ENCODE measurements at regions of chr2 and their contacts with region 1.

Region 1: GRCh38 chr2:101704046-101704466 is 6.5 kb downstream of the MAP4K4 start:
- DNase-seq: no peak
- ATAC-seq: peak in 3 of 8 donors; percentile 44 to 61 (median 56)
- H3K4me3 ChIP-seq: peak overlapping the region in 1 of 10 donors; percentile 15
- H3K27ac ChIP-seq: peak overlapping the region in 6 of 10 donors; percentile 14 to 67 (median 38)
- H3K4me1 ChIP-seq: peaks cover 11 to 91% (median 85%) of the 10 kb centered on the region in 9 donors
- H3K27me3 ChIP-seq: no peaks in the 10 kb centered on the region
- CTCF ChIP-seq: no peak

Region 2: GRCh38 chr2:101623031-101623521 is 81.0 kb before region 1 on chr2:
- intact Hi-C with region 1: no loop called
- DNase-seq: no peak
- ATAC-seq: peak in 6 of 8 donors; percentile 25 to 72 (median 44)
- H3K4me3 ChIP-seq: no peak overlapping the region
- H3K27ac ChIP-seq: no peak overlapping the region
- H3K4me1 ChIP-seq: peaks cover 0 to 34% (median 0%) of the 10 kb centered on the region in 9 donors
- H3K27me3 ChIP-seq: peaks cover 0 to 48% (median 0%) of the 10 kb centered on the region in 7 donors
- CTCF ChIP-seq: no peak

Region 3: DNA sequence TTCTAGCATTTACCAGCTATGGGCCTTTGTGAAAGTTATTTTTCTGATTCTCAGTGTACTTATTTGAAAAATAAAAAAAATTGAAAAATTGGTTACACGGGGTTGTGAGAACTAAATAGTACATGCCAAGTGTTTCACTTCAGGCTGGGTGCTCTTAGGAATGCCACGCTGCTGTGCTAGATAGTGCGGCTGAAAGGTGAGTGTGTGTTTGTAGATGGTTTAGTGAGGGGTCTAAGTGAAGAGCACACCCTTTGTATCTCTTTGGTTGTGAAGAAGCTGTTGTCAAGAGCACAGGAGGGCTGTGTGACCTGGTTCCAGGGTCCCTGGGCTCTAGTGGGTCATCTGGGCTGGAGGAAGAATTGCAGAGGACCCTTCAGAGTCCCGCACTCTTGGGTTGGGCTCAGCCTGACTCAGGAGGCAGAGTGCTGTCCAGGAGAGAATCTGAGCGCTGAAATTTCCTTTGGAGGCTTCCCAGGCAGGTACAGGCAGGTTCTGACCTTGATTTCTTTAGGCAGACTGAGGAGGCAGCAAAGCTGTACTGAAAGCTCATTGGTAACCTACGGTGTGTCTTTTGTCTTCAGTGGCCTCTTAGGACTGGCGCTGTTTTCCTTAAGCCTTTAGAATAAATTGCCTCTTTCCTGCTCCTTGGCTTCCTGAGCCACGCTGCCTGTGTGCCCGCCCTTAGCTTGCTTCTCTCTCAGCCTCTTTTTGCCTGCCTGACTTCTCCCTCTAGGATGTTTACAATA is 37.9 kb after region 1 on chr2:
- intact Hi-C with region 1: loop called in 1 of 10 experiments (anchors 5 kb)
- DNase-seq: no peak
- ATAC-seq: peak in 6 of 8 donors; percentile 23 to 46 (median 40)
- H3K4me3 ChIP-seq: peak overlapping the region in 1 of 10 donors; percentile 12
- H3K27ac ChIP-seq: peak overlapping the region in 8 of 10 donors; percentile 47 to 71 (median 66)
- H3K4me1 ChIP-seq: peaks cover 19 to 96% (median 85%) of the 10 kb centered on the region in 9 donors
- H3K27me3 ChIP-seq: no peaks in the 10 kb centered on the region
- CTCF ChIP-seq: no peak

Region 4: DNA sequence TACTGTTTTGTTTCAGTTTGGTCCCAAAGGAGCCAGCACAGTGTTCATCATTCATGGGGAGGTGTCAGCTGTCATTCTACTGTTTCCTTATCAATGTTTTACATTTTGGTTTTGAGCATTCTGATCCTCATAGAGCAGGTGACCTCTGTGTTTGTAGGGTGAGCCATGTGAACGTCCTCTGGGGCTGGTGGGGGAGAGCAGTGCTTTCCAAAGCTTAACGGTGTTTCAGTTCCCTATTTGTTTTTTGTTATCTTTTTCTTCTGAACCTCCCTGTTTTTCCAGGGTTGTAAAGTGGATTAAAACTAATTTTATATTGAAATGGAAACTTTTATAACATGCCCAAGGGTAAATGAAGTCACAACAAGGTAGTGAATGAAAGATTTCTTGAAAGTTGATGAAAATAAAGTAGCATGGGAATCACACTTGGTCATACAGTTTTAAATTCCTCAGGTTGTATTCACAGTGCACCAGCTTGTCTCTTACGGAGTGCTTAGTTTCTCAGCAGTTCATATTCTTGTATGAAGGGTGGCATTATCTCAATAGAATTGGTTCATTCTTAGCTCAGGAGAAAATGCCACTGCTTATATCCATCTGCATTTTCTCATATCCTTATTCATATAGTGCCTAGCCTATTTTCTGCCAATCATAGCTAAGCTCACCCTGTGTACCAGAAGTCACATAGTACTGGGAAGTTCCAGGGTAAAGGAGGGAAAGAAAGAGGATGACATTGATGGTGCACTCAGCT is 48.0 kb after region 1 on chr2:
- intact Hi-C with region 1: loop called in 5 of 10 experiments (anchors 5 to 10 kb)
- DNase-seq: no peak
- ATAC-seq: peak in 4 of 8 donors; percentile 30 to 48 (median 38)
- H3K4me3 ChIP-seq: no peak overlapping the region
- H3K27ac ChIP-seq: peak overlapping the region in 5 of 10 donors; percentile 17 to 52 (median 37)
- H3K4me1 ChIP-seq: peaks cover 24 to 81% (median 74%) of the 10 kb centered on the region in 9 donors
- H3K27me3 ChIP-seq: no peaks in the 10 kb centered on the region
- CTCF ChIP-seq: no peak

Region 5: GRCh38 chr2:101770726-101771125 is 66.7 kb after region 1 on chr2:
- intact Hi-C with region 1: loop called in 2 of 10 experiments (anchors 10 kb)
- DNase-seq: no peak
- ATAC-seq: peak in 3 of 8 donors; percentile 33 to 43 (median 38)
- H3K4me3 ChIP-seq: no peak overlapping the region
- H3K27ac ChIP-seq: peak overlapping the region in 5 of 10 donors; percentile 5 to 47 (median 22)
- H3K4me1 ChIP-seq: peaks cover 24 to 99% (median 92%) of the 10 kb centered on the region in 9 donors
- H3K27me3 ChIP-seq: no peaks in the 10 kb centered on the region
- CTCF ChIP-seq: peak in 6 of 9 donors; percentile 40 to 60 (median 46)